Tibial artery (tissue), 4 donors: ENCODE measurements at regions of chr17 and their contacts with region 1.

Region 1: DNA sequence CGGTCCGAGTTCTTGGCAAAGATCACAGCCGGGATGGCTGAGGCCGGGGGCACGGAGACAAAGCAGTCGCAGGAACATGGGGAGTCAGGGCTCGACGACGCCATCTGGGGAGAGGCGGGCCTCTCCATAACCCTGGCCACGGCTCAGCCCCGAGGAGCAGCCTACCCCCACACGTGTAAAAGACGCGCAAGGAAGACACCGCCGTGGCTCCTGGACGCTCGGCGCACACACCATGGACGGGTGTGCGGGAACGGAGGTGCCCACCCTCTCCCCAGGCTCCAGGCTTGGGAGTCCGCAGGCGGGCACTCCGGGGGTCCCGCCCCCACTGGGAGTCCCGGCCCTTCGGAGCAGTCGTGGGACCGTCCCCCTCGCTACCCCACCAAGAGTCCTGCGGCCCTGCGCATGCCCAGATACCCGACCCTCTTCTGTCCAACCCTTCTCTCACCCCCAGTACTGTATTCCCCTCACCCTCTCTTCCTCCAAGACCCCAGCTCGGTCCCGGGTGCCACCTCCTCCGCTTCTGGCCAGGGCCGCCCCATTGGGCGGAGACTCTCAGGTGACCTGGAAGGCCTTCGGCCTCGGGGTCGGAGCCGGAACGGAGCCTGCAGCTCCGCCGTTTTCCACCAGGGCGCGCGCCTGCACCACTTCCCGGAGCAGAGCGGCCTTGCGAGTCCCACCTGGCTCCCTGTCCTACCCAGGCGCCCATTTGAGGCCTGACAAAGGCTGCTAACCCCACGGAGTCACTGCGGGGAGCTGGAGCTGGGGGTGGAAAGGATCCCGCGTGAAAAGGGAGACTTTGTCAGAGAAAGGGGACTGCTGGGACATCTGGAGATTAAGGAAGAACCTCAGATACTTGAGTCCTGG is at the start of gene SCRN2:
- DNase-seq: peak; percentile 85 to 92
- H3K4me3 ChIP-seq: peak within 1 kb of the TSS; percentile 59 to 77
- H3K27ac ChIP-seq: peak within 1 kb of the TSS; percentile 60 to 65
- H3K4me1 ChIP-seq: peaks cover 0 to 38% (median 14%) of the 10 kb centered on the region in 4 donors
- H3K27me3 ChIP-seq: peaks cover 0 to 17% of the 10 kb centered on the region in 2 donors
- CTCF ChIP-seq: peak; percentile 94 to 97

Region 2: GRCh38 chr17:47852093-47852949 is 11.3 kb after region 1 on chr17:
- intact Hi-C with region 1: no loop called
- DNase-seq: no peak
- H3K4me3 ChIP-seq: no peak overlapping the region
- H3K27ac ChIP-seq: no peak overlapping the region
- H3K4me1 ChIP-seq: peaks cover 0 to 21% (median 15%) of the 10 kb centered on the region in 4 donors
- H3K27me3 ChIP-seq: peaks cover 4 to 100% of the 10 kb centered on the region in 2 donors
- CTCF ChIP-seq: no peak

Region 3: DNA sequence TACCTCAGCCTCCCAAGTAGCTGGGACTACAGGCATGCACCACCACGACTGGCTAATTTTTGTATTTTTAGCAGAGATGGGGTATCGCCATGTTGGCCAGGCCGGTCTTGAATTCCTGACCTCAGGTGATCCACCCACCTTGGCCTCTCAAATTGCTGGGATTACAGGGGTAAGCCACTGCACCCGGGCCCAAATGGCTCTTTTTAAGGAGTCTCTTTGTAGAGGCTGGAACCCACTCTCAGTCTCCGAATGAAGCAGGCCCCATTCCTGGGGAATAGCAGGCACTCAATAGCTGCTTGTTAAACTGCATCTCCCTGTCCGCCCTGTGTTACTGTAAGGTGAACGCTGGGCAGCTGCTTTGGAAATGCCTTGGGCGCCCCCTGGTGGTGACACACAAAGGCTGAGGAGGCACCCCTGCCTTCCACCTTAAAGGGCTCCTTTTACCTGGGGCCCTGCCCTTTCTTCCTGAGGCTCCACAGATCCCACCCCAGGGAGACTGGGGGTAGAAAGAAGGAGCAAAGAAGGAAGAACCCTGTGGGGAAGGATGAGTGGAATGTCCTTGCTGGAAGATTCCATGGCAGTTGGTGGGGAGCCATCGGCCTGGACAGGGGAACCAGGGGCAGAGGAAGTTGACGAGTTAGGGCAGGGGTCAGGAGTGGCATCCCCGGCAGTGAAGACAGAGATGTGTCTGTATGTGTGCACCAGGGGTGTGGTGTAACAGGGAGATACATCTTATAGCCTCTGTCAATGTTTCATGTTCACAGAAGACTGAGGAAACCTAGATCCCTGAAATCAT is 49.0 kb after region 1 on chr17:
- intact Hi-C with region 1: loop called (anchors 2 kb)
- DNase-seq: peak; percentile 84 to 89
- H3K4me3 ChIP-seq: no peak overlapping the region
- H3K27ac ChIP-seq: no peak overlapping the region
- H3K4me1 ChIP-seq: peaks cover 0 to 15% (median 7%) of the 10 kb centered on the region in 4 donors
- H3K27me3 ChIP-seq: no peaks in the 10 kb centered on the region
- CTCF ChIP-seq: peak; percentile 93 to 95

Region 4: DNA sequence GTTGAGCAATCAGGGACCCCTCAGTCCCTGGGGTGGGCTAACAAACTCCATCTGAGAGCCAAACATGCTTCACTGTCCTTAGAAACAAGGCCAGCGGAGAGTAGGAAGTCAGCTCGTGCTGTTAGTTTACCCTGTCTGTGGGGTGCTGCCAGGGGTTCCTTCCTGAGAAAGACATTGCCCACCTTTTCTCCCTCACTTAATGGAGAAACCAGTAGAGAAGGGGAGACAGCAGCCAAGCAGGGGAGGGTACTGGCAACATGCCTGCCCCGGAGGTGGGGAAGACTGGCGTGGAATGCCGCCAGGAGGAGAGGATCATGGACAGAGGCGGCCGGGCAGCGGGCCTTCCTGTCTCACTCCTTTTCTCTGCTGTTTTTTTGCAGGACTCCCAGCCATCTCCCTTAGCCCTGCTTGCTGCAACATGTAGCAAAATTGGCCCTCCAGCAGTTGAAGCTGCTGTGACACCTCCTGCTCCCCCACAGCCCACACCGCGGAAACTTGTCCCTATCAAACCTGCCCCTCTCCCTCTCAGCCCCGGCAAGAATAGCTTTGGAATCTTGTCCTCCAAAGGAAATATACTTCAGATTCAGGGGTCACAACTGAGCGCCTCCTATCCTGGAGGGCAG is 74.9 kb after region 1 on chr17:
- intact Hi-C with region 1: no loop called
- DNase-seq: no peak
- H3K4me3 ChIP-seq: no peak overlapping the region
- H3K27ac ChIP-seq: no peak overlapping the region
- H3K4me1 ChIP-seq: peaks cover 0 to 46% (median 6%) of the 10 kb centered on the region in 4 donors
- H3K27me3 ChIP-seq: no peaks in the 10 kb centered on the region
- CTCF ChIP-seq: no peak

Region 5: DNA sequence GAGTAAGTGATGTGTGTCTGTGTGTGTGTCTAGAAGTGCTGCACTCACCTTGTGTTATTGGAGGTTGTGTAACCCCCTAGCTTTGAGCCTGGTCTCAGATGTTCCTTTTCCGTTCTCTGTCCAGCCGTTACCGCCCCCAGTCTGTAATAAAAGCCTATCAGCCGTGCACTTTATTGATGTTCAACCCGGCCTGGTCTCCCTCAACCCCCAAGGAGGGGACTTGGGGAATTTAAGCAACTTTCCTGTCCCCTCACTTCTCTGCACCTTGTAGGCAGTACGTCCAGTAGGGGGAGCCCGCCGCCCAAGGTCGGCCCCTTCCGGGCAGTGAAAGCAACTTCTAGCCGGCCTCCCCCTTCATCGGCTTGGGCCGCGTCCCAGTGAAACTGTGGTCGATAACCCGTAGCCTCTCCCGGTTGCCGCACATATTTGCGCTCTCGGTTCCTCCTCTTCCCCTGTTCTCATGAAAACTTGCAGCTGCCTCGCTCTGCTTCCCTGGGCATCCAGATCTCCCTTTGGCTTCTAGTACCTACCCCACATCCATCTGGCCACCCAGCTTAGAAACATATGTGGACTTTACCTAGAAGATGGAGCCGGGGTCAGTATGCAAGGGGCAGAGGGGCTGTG is 108.3 kb after region 1 on chr17:
- intact Hi-C with region 1: loop called (anchors 5 kb)
- DNase-seq: peak; percentile 80 to 86
- H3K4me3 ChIP-seq: peak overlapping the region; percentile 32 to 47
- H3K27ac ChIP-seq: peak overlapping the region; percentile 54 to 67
- H3K4me1 ChIP-seq: peaks cover 0 to 32% (median 16%) of the 10 kb centered on the region in 4 donors
- H3K27me3 ChIP-seq: no peaks in the 10 kb centered on the region
- CTCF ChIP-seq: peak; percentile 81 to 90

Region 6: GRCh38 chr17:47970704-47971463 is 129.9 kb after region 1 on chr17 and contains the start of gene CDK5RAP3:
- intact Hi-C with region 1: loop called (anchors 5 kb)
- DNase-seq: peak; percentile 100
- H3K4me3 ChIP-seq: peak within 1 kb of the TSS; percentile 89 to 100
- H3K27ac ChIP-seq: peak within 1 kb of the TSS; percentile 88 to 93
- H3K4me1 ChIP-seq: peaks cover 0 to 21% (median 15%) of the 10 kb centered on the region in 4 donors
- H3K27me3 ChIP-seq: no peaks in the 10 kb centered on the region
- CTCF ChIP-seq: peak; percentile 98